PC-3 (cell line): ENCODE measurements at regions of chr10 and their contacts with region 1.

Region 1: GRCh38 chr10:109427411-109427810 is 495.9 kb downstream of the XPNPEP1 start:
- DNase-seq: peak; percentile 57
- ATAC-seq: 0 out of 2 replicates have a peak, but pooled peaks have one; percentile 18
- H3K4me3 ChIP-seq: no peak overlapping the region
- H3K27ac ChIP-seq: no peak overlapping the region
- H3K4me1 ChIP-seq: peaks cover 41% of the 10 kb centered on the region
- H3K27me3 ChIP-seq: no peaks in the 10 kb centered on the region
- CTCF ChIP-seq: peak; percentile 58

Region 2: DNA sequence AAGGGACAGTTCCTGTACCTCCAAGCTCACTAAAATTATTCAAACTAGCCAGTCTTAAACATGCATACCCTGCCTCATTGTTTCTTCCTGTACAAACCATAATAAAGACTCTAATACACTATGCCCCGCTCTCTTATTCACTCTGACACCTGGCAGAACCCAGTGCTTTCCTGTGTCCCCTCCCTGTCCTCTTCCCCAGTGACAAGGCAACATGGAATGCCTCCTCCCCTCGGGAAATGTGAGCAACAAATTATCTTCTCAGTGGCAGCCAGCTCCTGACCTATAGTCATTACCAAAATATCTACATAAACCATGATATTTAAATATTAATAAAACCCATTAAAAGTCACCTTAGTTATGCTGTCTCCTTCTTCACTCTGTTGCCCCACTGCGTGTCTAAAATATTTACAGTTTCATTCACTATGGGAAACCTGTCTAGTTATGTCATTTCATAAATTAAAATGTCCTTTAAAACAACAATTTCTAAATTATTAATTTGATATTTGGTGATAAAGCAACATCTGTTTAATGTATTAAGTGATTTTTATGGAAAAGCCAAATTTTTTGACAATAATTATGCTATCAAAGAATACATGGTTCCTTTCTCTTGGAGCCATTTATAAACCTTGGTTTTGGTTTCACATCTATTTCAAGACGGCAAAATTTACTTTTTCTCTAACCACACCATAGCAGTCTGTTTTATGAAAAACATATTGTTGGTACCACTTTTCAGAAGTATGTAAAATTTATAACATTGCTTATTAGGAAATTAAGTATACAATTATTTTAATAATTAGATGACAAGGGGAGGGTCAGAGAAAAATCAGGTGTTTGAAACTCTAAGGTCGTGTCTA is 859.3 kb before region 1 on chr10:
- CTCF ChIA-PET with region 1: no interaction called
- POLR2A ChIA-PET with region 1: interaction called, 12 read pairs
- intact Hi-C with region 1: no loop called
- DNase-seq: peak; percentile 67
- ATAC-seq: peak; percentile 90
- H3K4me3 ChIP-seq: no peak overlapping the region
- H3K27ac ChIP-seq: 0 out of 2 replicates have a peak overlapping the region, but pooled peaks have one; percentile 18
- H3K4me1 ChIP-seq: peaks cover 16% of the 10 kb centered on the region
- H3K27me3 ChIP-seq: no peaks in the 10 kb centered on the region
- CTCF ChIP-seq: no peak

Region 3: GRCh38 chr10:108789919-108790318 is 637.5 kb before region 1 on chr10:
- CTCF ChIA-PET with region 1: no interaction called
- POLR2A ChIA-PET with region 1: interaction called, 7 read pairs
- intact Hi-C with region 1: loop called (anchors 1 kb)
- DNase-seq: peak; percentile 94
- ATAC-seq: peak; percentile 78
- H3K4me3 ChIP-seq: no peak overlapping the region; the same call in 1 of the 2 replicates
- H3K27ac ChIP-seq: peak overlapping the region; percentile 98
- H3K4me1 ChIP-seq: peaks cover 48% of the 10 kb centered on the region
- H3K27me3 ChIP-seq: no peaks in the 10 kb centered on the region
- CTCF ChIP-seq: no peak

Region 4: DNA sequence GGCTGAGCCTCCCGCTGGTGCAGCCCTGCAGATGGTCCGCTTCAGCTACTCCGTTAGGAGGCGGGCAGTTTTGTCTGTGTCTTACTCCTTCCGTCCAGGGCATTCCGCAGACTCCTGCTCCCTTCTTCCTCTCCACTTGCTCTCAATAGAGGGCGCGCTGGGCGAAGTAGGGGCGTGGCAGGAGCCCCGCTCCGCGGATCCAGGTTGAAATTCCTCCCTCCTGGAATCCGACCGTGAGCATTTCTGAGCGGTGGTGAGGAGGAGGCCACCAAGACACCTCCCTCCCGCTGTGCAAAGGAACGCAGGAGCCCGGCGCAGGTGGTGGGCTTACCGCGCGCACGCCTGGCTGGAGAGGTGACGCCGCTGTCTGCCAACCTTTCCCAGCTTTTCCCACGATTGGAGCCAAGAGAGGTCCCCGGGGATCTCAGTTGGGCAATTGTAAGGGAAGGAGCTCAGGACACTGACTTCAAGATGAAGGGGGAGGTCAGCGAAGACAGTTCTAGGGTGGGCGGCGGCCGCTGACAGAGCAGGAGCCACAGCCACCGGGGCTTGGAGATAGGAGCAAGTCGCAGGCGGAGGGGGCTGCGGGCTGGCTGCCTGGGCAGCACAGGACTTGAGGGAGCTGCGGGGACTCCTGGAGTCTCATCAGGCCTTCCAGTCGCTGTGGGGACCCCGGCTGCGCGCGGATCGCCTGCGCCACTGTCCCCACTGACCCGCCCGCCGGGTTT is 515.4 kb before region 1 on chr10:
- CTCF ChIA-PET with region 1: no interaction called
- POLR2A ChIA-PET with region 1: no interaction called
- intact Hi-C with region 1: loop called (anchors 5 kb)
- DNase-seq: peak; percentile 82
- ATAC-seq: peak; percentile 99
- H3K4me3 ChIP-seq: peak overlapping the region; percentile 81
- H3K27ac ChIP-seq: no peak overlapping the region
- H3K4me1 ChIP-seq: no peaks in the 10 kb centered on the region
- H3K27me3 ChIP-seq: no peaks in the 10 kb centered on the region
- CTCF ChIP-seq: peak; percentile 74

Region 5: DNA sequence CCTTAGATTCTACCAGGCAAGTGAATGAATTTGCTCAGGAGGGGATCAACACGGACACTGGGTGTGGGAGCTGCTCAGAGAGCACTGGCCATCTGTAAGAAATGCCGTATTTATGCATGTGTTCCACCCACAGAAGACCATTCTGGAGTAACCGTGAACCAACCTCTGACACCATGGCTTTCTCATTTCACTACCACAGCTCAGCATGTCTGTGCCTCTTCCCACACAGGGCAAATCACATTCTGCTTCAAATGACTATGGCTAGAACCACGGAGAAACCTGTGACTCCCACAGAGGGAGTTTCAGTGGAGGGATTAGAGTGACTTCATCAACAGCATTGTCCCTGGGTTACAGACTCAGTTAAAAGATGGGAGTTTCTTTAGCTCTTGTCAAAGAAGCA is 397.5 kb before region 1 on chr10:
- CTCF ChIA-PET with region 1: no interaction called
- POLR2A ChIA-PET with region 1: no interaction called
- intact Hi-C with region 1: loop called (anchors 5 kb)
- DNase-seq: no peak
- ATAC-seq: no peak
- H3K4me3 ChIP-seq: no peak overlapping the region
- H3K27ac ChIP-seq: no peak overlapping the region
- H3K4me1 ChIP-seq: no peaks in the 10 kb centered on the region
- H3K27me3 ChIP-seq: no peaks in the 10 kb centered on the region
- CTCF ChIP-seq: no peak

Region 6: GRCh38 chr10:109405338-109405737 is 22.1 kb before region 1 on chr10:
- CTCF ChIA-PET with region 1: no interaction called
- POLR2A ChIA-PET with region 1: no interaction called
- intact Hi-C with region 1: no loop called
- DNase-seq: no peak
- ATAC-seq: no peak
- H3K4me3 ChIP-seq: no peak overlapping the region
- H3K27ac ChIP-seq: no peak overlapping the region
- H3K4me1 ChIP-seq: peaks cover 3% of the 10 kb centered on the region; the same call in 1 of the 2 replicates
- H3K27me3 ChIP-seq: no peaks in the 10 kb centered on the region
- CTCF ChIP-seq: no peak

Region 7: GRCh38 chr10:109450702-109451101 is 23.3 kb after region 1 on chr10:
- CTCF ChIA-PET with region 1: no interaction called
- POLR2A ChIA-PET with region 1: no interaction called
- intact Hi-C with region 1: loop called (anchors 2 kb)
- DNase-seq: no peak
- ATAC-seq: no peak
- H3K4me3 ChIP-seq: no peak overlapping the region
- H3K27ac ChIP-seq: no peak overlapping the region
- H3K4me1 ChIP-seq: peaks cover 20% of the 10 kb centered on the region; the same call in 1 of the 2 replicates
- H3K27me3 ChIP-seq: no peaks in the 10 kb centered on the region
- CTCF ChIP-seq: no peak

Region 8: GRCh38 chr10:109773288-109774120 is 346.1 kb after region 1 on chr10:
- CTCF ChIA-PET with region 1: no interaction called
- POLR2A ChIA-PET with region 1: no interaction called
- intact Hi-C with region 1: loop called (anchors 5 kb)
- DNase-seq: peak; percentile 61
- ATAC-seq: peak; percentile 45
- H3K4me3 ChIP-seq: no peak overlapping the region
- H3K27ac ChIP-seq: no peak overlapping the region
- H3K4me1 ChIP-seq: 0 out of 2 replicates have a peak, but pooled peaks cover 3% of the 10 kb centered on the region
- H3K27me3 ChIP-seq: no peaks in the 10 kb centered on the region
- CTCF ChIP-seq: peak; percentile 72